A673 (cell line): ENCODE measurements at regions of chr6 and their contacts with region 1.

Region 1: GRCh38 chr6:4864519-4864918 is 88.3 kb downstream of the CDYL start:
- DNase-seq: no peak
- H3K4me3 ChIP-seq: no peak overlapping the region
- H3K27ac ChIP-seq: no peak overlapping the region
- H3K4me1 ChIP-seq: no peaks in the 10 kb centered on the region
- H3K27me3 ChIP-seq: no peaks in the 10 kb centered on the region
- CTCF ChIP-seq: no peak

Region 2: DNA sequence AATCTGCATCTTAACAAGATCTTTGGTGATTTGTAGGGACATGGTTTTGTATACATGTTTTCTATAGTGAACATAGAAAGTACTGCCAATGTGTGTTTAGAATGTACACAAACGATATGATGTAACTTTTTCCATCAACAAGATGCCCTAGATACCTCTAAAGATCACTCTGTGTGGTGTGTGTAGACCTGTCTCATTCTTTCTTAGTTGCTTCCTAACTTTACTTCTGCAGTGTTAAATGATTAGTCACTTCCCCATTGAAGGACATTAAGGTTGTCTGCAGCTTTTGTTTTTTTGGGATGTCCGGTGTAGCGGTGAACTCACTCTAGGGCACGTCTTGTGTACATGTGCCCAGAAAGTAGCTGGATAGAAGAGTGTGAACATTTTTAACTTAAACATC is 52.5 kb before region 1 on chr6:
- CTCF ChIA-PET with region 1: no interaction called
- POLR2A ChIA-PET with region 1: interaction called, 14 read pairs
- intact Hi-C with region 1: no loop called
- DNase-seq: no peak
- H3K4me3 ChIP-seq: no peak overlapping the region
- H3K27ac ChIP-seq: no peak overlapping the region
- H3K4me1 ChIP-seq: peaks cover 1% of the 10 kb centered on the region
- H3K27me3 ChIP-seq: no peaks in the 10 kb centered on the region
- CTCF ChIP-seq: no peak